Ascending aorta (tissue), 2 donors: ENCODE measurements at regions of chr1 and their contacts with region 1.

Region 1: GRCh38 chr1:9311029-9311428 is 18.3 kb downstream of the SPSB1 start:
- DNase-seq: no peak
- H3K4me3 ChIP-seq: peak overlapping the region in 1 of 2 donors; percentile 0
- H3K27ac ChIP-seq: peak overlapping the region in 1 of 2 donors; percentile 47
- H3K4me1 ChIP-seq: peaks cover 22 to 42% of the 10 kb centered on the region in 2 donors
- H3K27me3 ChIP-seq: no peaks in the 10 kb centered on the region
- CTCF ChIP-seq: no peak

Region 2: GRCh38 chr1:9225468-9225785 is 85.6 kb before region 1 on chr1:
- intact Hi-C with region 1: no loop called
- DNase-seq: no peak
- H3K4me3 ChIP-seq: no peak overlapping the region
- H3K27ac ChIP-seq: no peak overlapping the region
- H3K4me1 ChIP-seq: no peaks in the 10 kb centered on the region
- H3K27me3 ChIP-seq: no peaks in the 10 kb centered on the region
- CTCF ChIP-seq: no peak

Region 3: DNA sequence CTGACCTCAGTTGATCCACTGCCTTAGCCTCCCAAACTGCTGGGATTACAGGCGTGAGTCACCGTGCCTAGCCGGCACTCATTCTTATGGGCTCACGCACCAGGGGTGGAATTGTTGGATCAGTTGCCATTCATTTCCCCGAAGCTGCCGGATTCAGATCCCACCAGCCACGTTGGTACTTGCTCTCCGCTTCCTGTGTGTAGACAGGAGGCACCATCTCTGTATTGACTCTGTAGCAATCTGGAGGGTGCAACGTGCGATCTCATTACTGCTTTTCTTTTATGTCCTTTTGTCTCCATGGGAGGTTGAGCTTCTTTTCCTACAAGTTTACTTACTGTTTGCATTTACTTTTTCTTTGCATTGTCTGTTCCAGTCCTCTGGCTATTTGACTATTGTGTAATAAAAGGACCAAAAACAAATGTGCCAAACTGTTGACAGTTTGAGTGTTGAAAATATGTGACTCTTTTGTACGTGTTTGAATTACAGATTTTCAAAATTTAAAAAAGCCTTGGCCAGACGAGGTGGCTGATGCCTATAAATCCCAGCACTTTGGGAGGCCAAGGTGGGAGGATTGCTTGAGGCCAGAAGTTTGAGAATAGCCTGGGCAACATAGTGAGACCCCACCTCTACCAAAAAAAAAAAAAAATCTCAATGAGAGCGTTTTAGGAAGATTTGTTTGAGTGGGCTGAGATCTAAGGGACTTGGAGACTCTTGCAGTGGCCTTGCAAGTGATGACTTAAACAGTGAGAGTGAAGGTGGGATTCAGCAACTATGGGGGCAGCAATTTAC is 20.7 kb after region 1 on chr1:
- intact Hi-C with region 1: no loop called
- DNase-seq: no peak
- H3K4me3 ChIP-seq: no peak overlapping the region
- H3K27ac ChIP-seq: peak overlapping the region in 1 of 2 donors; percentile 52
- H3K4me1 ChIP-seq: peaks cover 0 to 24% of the 10 kb centered on the region in 2 donors
- H3K27me3 ChIP-seq: no peaks in the 10 kb centered on the region
- CTCF ChIP-seq: no peak

Region 4: DNA sequence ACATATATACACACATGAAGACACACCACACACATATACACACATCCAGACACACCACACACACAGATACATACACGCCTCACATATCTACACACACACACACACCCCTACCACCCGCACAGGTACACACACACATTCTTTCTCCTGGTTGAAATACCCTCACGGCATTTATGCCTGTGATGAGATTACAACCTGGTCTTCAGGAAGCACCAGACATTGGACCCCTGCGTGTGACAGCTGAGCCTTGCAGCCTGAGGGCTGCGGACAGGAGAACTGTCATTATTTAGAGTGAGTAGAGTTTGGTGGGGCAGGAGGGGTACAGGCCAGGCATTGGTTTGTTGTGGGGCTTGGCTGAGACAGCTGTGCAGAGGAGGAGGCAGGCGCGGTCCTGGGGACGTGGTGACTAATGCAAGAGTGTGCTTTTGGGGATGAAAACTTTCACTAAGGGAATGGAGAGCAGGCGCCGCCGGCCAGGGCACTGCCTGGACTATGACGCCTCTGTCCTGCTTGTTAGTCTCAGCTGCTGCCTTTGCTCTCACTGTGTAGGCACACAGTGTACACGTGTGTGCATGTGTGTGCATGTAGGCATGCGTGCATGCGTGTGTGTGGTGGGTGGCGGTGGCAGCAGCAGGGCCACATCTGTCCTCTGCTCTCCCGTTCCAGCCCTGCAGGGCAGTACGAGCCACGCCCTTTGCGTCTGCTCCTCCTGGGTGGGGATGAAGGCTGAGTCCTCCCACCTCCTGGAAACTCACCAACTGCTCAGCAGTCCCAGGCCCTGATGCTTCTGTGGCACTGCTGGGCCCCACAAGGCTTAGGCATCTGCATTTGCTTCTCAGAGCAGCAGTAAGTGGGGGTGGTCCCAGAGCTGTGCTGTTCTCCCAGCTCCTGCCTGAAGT is 39.2 kb after region 1 on chr1:
- intact Hi-C with region 1: loop called (anchors 5 kb)
- DNase-seq: peak in 1 of 2 donors; percentile 75
- H3K4me3 ChIP-seq: peak overlapping the region in 1 of 2 donors; percentile 34
- H3K27ac ChIP-seq: peak overlapping the region; percentile 58 to 82
- H3K4me1 ChIP-seq: peaks cover 12 to 65% of the 10 kb centered on the region in 2 donors
- H3K27me3 ChIP-seq: no peaks in the 10 kb centered on the region
- CTCF ChIP-seq: no peak